HEK293 (cell line): ENCODE measurements at regions of chr20 and their contacts with region 1.

Region 1: GRCh38 chr20:49219089-49219923 is at the start of gene DDX27:
- H3K4me3 ChIP-seq: peak within 1 kb of the TSS; percentile 71
- H3K27ac ChIP-seq: peak within 1 kb of the TSS; percentile 37; the same call in 1 of the 2 replicates
- H3K4me1 ChIP-seq: no peaks in the 10 kb centered on the region
- CTCF ChIP-seq: no peak

Region 2: GRCh38 chr20:49132995-49133478 is 86.3 kb before region 1 on chr20:
- CTCF ChIA-PET with region 1: interaction called, 101 read pairs
- POLR2A ChIA-PET with region 1: interaction called, 5 read pairs
- H3K4me3 ChIP-seq: no peak overlapping the region
- H3K27ac ChIP-seq: no peak overlapping the region
- H3K4me1 ChIP-seq: no peaks in the 10 kb centered on the region
- CTCF ChIP-seq: no peak

Region 3: DNA sequence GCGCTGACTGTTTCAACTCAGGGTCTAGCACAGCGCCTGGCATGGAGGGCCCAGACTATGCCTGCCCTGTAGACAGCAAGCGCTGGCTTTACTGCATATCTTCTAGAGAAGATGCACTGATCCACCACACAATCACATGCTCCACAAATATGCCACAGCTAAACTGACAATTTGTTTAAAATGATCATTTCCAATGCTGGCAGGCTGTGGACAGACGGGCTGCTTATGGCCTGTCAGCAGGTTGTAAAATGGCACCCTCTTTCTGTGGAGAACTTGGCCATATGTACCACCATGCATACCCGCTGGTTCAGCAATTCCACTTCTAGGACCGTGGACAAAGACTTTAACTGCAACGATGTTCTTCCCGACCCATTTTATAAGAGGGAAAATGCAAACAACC is 72.0 kb before region 1 on chr20:
- CTCF ChIA-PET with region 1: interaction called, 12 read pairs
- POLR2A ChIA-PET with region 1: no interaction called
- H3K4me3 ChIP-seq: no peak overlapping the region
- H3K27ac ChIP-seq: no peak overlapping the region
- H3K4me1 ChIP-seq: no peaks in the 10 kb centered on the region
- CTCF ChIP-seq: no peak

Region 4: DNA sequence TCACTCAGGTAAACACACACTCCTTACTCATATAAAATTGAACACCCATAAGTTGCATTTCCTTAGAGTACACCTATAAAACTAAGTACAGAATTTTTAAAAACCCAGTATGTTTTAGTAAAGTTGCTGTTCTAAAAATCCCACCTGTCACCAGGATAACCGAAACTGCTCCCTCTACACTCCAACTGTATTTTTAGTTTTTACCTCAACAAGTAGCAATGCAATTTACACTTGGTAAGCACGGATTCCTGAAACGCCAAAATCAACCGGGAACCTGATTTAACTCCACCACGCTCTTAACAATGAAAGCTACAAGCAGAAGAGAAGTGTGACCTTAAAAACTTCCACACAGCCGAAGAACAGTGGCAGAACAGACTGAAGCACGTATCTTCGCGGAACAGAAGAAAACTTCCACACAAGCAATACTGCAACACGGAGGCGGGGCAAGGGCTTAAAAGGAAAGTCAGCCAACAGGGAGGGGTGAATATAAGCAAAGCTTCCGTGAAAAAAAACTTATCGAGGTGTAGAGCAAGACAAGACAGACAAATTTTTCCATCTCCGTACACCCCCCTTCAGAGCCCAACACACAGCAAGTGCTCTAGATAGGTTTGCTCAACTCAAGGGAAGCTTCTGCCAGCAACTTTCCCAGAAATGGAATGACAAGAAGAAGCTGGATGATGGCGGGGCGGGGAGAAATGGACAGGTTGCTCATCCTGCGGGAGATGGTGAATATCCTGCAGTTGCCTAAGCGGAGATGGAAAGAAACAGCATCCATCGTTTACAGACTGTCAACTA is 32.6 kb before region 1 on chr20:
- CTCF ChIA-PET with region 1: interaction called, 37 read pairs
- POLR2A ChIA-PET with region 1: interaction called, 4 read pairs
- H3K4me3 ChIP-seq: peak overlapping the region; percentile 85
- H3K27ac ChIP-seq: peak overlapping the region; percentile 89; the same call in 1 of the 2 replicates
- H3K4me1 ChIP-seq: peaks cover 8% of the 10 kb centered on the region
- CTCF ChIP-seq: 0 out of 2 replicates have a peak, but pooled peaks have one; percentile 7

Region 5: DNA sequence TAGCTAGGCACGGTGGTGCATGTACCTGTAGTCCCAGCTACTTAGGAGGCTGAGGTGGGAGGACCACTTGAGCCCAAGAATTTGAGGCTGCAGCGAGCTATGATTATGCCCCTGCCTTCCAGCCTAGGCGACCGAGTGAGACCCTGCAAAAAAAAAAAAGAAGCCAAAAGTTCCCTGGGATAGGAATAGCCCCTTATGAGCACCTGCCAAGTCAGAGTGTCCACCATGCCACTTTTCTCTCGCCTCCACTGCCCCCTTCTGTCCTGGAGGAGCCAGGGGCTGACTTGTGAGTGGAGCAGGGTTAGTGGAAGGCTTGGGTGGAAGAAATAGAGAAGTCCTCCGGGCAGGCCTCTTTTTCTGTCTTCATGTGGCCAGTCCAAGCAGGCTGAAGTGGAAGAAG is 12.2 kb before region 1 on chr20:
- CTCF ChIA-PET with region 1: interaction called, 11 read pairs
- POLR2A ChIA-PET with region 1: interaction called, 4 read pairs
- H3K4me3 ChIP-seq: no peak overlapping the region
- H3K27ac ChIP-seq: no peak overlapping the region
- H3K4me1 ChIP-seq: no peaks in the 10 kb centered on the region
- CTCF ChIP-seq: no peak